ENCODE measurements at regions of chr17 and their contacts with region 1.

Region 1: DNA sequence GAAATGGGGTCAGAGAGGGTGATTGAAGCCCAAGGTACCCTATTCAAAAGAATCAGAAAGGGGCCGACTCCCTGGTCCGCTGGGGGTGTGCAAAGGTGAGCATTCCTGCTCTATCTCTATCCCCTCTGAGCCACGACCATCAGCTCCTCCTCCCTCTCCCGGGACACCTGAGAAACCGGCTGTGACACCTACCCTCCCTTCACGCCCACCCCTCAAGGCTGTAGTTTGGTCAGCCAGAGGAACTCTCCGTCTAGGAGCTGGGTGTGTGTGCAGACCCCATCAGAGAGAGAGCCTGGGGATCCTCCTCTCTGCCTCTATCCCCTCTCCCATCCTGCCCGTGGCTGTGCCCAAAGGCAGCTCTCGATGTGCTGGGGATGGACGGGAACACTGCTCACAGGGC is 27.6 kb upstream of the DLX4 start:
- DNase-seq: no peak
- ATAC-seq: no peak
- H3K4me3 ChIP-seq: no peak overlapping the region
- H3K4me3 Mint-ChIP-seq: no peak overlapping the region
- H3K27ac ChIP-seq: no peak overlapping the region
- H3K27ac Mint-ChIP-seq: no peak overlapping the region
- H3K4me1 ChIP-seq: peaks cover 0 to 4% of the 10 kb centered on the region in 2 donors
- H3K4me1 Mint-ChIP-seq: peaks cover 2% of the 10 kb centered on the region
- H3K27me3 ChIP-seq: peaks cover 0 to 20% (median under 1%) of the 10 kb centered on the region in 4 experiments
- H3K27me3 Mint-ChIP-seq: peaks cover 42% of the 10 kb centered on the region
- CTCF ChIP-seq: no peak

Region 2: DNA sequence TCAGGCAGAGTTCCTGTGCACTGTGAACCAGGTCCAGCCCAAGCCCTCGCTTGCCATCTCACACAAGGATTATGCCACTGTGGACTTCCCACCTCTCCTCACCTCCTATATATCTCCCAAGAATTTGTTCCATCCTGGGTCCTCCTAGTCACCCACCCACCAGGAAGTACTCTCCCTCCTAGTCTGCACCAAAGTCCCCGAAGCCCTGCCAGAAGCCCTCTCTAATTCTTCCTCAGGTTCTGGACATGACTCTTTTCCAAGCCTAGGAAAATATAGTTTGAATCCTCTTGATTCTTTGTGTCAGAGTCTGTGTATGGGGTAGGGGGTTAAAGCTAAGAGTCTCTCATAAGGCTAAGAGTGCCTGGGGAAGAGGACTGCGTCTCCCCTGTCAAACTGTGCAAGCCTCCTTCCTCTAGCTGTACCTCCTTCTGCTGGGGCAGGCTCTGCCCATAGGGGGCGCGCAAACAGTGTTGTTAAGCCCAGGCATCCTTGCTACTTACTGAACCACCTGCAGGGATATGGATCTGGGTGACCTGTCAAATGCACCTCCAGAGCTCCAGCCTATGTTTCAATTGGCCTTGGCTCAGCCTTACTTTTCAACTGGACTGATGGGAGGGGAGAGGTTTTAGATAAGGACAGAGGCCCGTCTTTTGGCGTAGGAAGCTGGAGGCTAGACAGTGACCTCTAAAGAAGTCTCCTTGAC is 10.9 kb after region 1 on chr17:
- CTCF ChIA-PET with region 1: interaction called, 13 read pairs
- POLR2A ChIA-PET with region 1: no interaction called
- intact Hi-C with region 1: no loop called
- DNase-seq: peak; percentile 68
- ATAC-seq: peak; percentile 71
- H3K4me3 ChIP-seq: no peak overlapping the region
- H3K4me3 Mint-ChIP-seq: no peak overlapping the region
- H3K27ac ChIP-seq: no peak overlapping the region
- H3K27ac Mint-ChIP-seq: no peak overlapping the region
- H3K4me1 ChIP-seq: no peaks in the 10 kb centered on the region
- H3K4me1 Mint-ChIP-seq: no peaks in the 10 kb centered on the region
- H3K27me3 ChIP-seq: peaks cover 0 to 36% (median 3%) of the 10 kb centered on the region in 4 experiments
- H3K27me3 Mint-ChIP-seq: peaks cover 55% of the 10 kb centered on the region
- CTCF ChIP-seq: peak; percentile 66

Measured in B cell (primary cell).